ENCODE measurements at regions of chr20 and their contacts with region 1.

Region 1: DNA sequence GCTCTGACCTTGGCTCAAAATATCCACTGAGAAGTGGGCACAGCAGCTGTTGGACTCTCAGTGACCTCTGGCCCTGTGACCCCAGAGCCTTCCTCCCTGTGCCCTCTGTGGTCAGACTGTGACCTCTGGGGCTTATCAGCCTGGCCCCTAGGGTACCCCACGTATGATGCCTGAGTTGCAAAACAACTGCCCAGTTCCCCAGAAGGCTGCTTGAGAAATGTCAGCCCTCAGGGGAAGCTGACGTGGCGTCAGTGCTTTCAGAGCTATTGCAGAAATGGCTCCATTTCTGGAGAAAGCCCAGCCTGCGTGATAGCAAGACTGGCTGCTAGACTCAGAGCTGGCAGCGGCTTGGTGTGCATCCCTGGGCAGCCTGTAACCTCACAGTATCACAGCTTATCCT is 31.5 kb upstream of the TGM2 start:
- DNase-seq: no peak
- ATAC-seq: peak; percentile 51
- H3K4me3 ChIP-seq: no peak overlapping the region
- H3K27ac ChIP-seq: no peak overlapping the region
- H3K4me1 ChIP-seq: peaks cover 3% of the 10 kb centered on the region; the same call in 1 of the 2 replicates
- H3K27me3 ChIP-seq: no peaks in the 10 kb centered on the region
- CTCF ChIP-seq: no peak

Region 2: DNA sequence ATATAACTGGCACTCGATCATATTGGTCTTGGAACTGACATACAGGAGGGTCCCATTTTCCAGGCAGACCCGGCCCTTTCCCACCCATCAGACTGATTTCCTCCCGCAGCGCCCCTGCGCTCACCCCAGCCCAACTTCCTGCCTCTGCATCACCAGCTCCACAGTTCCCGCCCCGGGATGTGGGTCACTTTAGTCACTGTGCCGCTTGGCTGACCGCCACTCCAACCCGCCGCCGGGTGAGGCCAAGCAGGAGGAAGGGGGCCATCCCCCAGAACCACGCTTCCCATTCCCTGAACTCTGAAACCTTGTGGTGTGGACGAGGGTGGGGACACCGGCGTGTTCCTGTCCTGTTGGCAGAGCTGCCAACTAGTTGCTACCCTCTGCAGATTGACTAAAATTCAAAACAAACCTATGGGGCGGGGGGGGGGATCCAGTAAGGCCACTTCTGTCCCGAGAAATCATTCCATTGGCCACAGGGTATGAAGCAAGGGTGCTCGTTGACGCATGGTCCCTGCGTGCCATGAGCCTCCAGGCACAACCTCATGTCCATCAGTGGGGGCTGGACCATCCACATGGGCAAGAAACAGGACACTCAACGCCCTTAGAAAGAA is 43.9 kb before region 1 on chr20:
- CTCF ChIA-PET with region 1: no interaction called
- POLR2A ChIA-PET with region 1: no interaction called
- in situ Hi-C with region 1: no loop called
- intact Hi-C with region 1: no loop called
- DNase-seq: no peak
- ATAC-seq: 0 out of 2 replicates have a peak, but pooled peaks have one; percentile 51
- H3K4me3 ChIP-seq: no peak overlapping the region
- H3K27ac ChIP-seq: no peak overlapping the region
- H3K4me1 ChIP-seq: peaks cover 8% of the 10 kb centered on the region
- H3K27me3 ChIP-seq: no peaks in the 10 kb centered on the region
- CTCF ChIP-seq: no peak

Region 3: DNA sequence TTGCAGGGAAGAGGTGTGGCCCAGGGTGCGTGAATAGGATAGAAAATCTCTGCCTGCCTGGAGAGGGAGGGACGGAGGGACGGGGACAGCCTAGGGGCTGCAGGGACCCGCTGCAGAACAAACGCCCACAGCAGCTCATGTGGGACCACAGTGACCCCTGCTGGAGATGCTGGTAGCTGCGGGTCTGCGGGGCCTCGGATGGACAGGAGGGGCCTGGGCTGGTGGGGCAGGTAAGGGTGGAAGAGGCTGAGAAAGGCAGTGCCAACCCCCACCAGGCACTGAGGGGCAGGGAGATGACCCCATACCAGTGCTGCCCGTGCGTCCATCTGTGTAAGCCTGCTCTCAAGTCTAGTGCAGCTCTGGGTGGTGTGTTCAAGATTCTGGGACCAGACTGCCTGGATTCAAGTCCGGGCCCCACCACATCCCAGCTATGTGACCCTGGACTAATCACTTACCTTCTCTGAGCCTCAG is 24.6 kb after region 1 on chr20:
- CTCF ChIA-PET with region 1: no interaction called
- POLR2A ChIA-PET with region 1: no interaction called
- in situ Hi-C with region 1: no loop called
- intact Hi-C with region 1: no loop called
- DNase-seq: no peak
- ATAC-seq: peak; percentile 79
- H3K4me3 ChIP-seq: peak overlapping the region in 1 of 2 experiments; percentile 23; a peak in 2 of 4 replicates
- H3K27ac ChIP-seq: no peak overlapping the region
- H3K4me1 ChIP-seq: peaks cover 12% of the 10 kb centered on the region
- H3K27me3 ChIP-seq: no peaks in the 10 kb centered on the region
- CTCF ChIP-seq: peak; percentile 96

Region 4: DNA sequence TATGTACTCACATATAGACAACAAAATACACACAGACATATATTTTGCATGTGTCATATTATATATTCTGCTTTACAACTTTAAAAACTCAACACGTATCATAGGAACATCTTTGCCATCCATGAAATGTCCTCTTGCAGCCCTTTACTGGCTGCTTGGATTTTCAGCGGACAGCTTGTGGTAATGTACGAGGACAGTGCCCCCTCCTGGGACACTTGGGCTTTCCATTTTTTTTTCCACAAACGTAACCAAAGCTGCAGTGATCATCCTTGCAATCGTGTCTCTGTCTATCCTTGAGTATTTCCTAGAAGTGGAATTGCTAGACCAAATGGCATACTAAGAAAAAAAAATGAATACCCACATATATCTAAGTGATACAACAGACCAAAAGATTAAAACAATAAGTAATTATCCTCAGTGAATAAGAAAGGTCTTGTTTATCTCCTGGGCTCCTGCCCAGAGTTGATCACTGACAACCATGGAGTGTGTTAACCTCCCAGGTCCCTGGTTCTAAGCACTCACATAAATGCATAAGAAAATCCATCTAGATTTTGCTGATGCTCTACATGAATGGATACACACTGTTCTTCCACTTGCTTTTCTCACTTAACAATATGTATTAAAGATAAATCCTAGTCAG is 125.5 kb after region 1 on chr20:
- CTCF ChIA-PET with region 1: no interaction called
- POLR2A ChIA-PET with region 1: interaction called, 10 read pairs
- in situ Hi-C with region 1: no loop called
- intact Hi-C with region 1: no loop called
- DNase-seq: no peak
- ATAC-seq: peak; percentile 84
- H3K4me3 ChIP-seq: no peak overlapping the region
- H3K27ac ChIP-seq: no peak overlapping the region
- H3K4me1 ChIP-seq: no peaks in the 10 kb centered on the region
- H3K27me3 ChIP-seq: peaks cover 3% of the 10 kb centered on the region
- CTCF ChIP-seq: peak; percentile 87

Region 5: DNA sequence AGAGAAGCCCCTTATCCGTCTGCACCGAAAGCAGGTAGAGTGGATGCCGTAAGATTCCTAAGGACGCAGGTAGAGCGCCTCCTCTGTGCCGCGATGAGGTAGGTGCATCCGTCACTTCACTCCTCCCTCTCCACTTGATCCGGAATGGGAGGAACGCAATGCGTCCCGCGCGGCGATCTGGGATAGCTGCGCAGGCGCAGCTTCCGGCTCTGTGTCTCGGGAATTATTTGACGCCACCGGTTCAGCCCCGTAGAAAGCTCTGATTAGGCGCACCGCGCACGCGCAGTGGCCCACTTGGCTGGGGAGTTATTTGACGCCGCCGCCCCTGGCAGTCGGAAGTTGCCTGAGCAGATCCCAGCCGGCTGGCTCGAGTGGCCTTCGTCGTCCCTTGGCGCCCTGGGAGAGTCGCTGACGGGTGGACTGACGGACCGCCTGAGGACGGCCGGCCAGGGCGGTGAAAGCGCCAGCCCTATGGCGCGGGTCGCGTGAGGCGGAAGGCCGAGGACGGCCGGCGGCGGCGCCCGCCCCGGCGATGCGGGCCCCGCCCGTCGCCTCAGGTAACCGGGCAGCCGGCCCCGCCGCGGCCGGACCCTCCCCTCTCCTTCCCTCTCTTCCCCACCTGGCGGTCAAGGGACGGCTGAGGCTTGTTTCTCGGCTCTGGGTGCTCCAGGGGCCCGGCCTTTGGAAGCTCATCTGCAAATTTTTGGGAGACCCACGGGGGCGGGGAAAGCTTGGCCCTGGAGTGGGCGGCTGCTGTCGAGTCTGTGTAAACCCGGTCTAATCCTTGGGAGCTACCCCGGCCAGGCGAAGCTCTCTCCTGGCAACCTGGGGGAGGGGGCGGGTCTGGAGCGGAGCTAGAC is 276.2 kb after region 1 on chr20 and contains the start of gene RALGAPB:
- CTCF ChIA-PET with region 1: no interaction called
- POLR2A ChIA-PET with region 1: no interaction called
- in situ Hi-C with region 1: no loop called
- intact Hi-C with region 1: no loop called
- DNase-seq: peak; percentile 99
- ATAC-seq: peak; percentile 98
- H3K4me3 ChIP-seq: peak within 1 kb of the TSS; percentile 61 to 90
- H3K27ac ChIP-seq: peak within 1 kb of the TSS; percentile 89
- H3K4me1 ChIP-seq: peaks cover 26% of the 10 kb centered on the region
- H3K27me3 ChIP-seq: no peaks in the 10 kb centered on the region
- CTCF ChIP-seq: peak; percentile 68
- total RNA-seq, gene RALGAPB: 33.1 TPM

Region 6: DNA sequence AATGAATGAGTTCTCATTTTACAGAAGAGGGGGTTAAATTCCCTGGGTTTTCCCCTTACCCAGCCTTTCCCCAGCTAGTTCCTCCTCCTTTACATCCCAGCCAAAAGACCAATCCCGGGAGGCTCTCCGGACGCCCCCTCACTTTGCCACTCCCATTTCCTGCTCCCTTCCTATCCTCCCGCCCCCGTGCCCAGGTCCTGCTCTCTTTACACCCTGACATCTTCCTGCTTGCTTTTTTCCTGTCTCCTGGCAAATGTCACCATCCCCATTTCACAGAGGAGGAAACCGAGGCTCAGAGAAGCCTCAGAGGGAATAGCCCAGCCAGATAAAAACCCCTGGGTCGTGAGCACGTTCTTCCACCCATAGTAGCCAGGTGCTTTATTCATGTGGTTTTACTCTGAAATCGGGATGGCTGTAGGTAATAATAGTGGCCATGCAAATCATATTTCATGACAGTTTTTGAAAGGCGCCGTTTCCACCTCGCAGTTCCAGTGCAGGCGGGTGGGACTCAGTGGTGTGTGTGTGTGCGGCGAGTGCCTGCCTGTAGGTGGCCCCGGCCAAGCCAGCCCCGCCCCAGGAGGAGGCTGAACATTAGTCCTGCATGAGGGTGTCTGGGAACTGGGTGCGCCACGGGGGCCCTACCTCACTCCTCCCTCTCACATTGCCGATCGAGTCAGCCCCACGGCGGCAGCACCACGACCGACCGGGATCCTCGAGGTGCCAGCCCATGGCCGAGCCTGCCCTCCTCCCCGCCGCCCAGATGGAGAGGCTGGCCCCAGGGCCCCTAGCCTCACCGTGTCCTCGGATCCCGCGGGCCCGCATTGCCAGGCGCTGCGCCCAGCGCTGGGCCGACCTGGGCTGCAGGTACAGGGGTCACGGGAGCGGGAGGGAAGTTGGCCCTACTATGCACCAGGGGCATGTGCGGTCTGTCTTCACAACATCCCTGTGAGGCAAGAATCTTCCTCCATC is 404.9 kb after region 1 on chr20 and contains the start of gene ARHGAP40:
- CTCF ChIA-PET with region 1: no interaction called
- POLR2A ChIA-PET with region 1: no interaction called
- in situ Hi-C with region 1: no loop called
- intact Hi-C with region 1: no loop called
- DNase-seq: no peak
- ATAC-seq: peak; percentile 92
- H3K4me3 ChIP-seq: peak within 1 kb of the TSS; percentile 16 to 23; a peak in 1 of 4 replicates
- H3K27ac ChIP-seq: no peak within 1 kb of the TSS
- H3K4me1 ChIP-seq: peaks cover 5% of the 10 kb centered on the region
- H3K27me3 ChIP-seq: peaks cover 9% of the 10 kb centered on the region
- CTCF ChIP-seq: peak; percentile 36
- total RNA-seq, gene ARHGAP40: 0.18 TPM